Panc1 (cell line): ENCODE measurements at regions of chr17 and their contacts with region 1.

Region 1: GRCh38 chr17:79741751-79742588 is 11.2 kb downstream of the ENPP7 start:
- DNase-seq: no peak
- ATAC-seq: peak; percentile 85
- H3K4me3 ChIP-seq: peak overlapping the region; percentile 15 to 21; a peak in 3 of 4 replicates
- H3K27ac ChIP-seq: no peak overlapping the region
- H3K4me1 ChIP-seq: peaks cover 5% of the 10 kb centered on the region; the same call in 1 of the 2 replicates
- H3K27me3 ChIP-seq: no peaks in the 10 kb centered on the region
- CTCF ChIP-seq: peak; percentile 100

Region 2: DNA sequence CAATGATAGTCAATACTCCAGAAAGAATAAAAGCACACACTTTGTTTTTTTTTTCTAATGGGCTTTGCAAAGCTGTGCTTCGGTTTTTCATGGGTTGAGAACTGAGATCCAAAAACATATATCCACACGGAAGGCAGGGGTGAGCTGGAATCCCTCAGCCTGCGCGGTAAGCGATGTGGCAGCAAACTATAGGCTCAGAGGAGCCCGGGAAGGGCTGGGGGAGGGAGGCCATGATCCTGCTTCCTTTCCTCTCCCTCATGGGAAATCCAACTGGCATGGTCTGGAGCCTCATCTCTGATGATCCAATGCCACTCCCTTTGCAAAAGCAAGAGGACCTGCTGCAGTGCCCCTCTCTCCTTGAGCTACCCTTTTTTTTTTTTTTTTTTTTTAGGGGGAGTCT is 139.3 kb before region 1 on chr17:
- CTCF ChIA-PET with region 1: interaction called, 13 read pairs
- POLR2A ChIA-PET with region 1: no interaction called
- in situ Hi-C with region 1: no loop called
- intact Hi-C with region 1: no loop called
- DNase-seq: no peak
- ATAC-seq: no peak
- H3K4me3 ChIP-seq: no peak overlapping the region
- H3K27ac ChIP-seq: no peak overlapping the region
- H3K4me1 ChIP-seq: no peaks in the 10 kb centered on the region
- H3K27me3 ChIP-seq: peaks cover 32% of the 10 kb centered on the region
- CTCF ChIP-seq: no peak

Region 3: GRCh38 chr17:79777116-79777893 is 35.3 kb after region 1 on chr17:
- CTCF ChIA-PET with region 1: interaction called, 3 read pairs
- POLR2A ChIA-PET with region 1: interaction called, 17 read pairs
- in situ Hi-C with region 1: no loop called
- intact Hi-C with region 1: no loop called
- DNase-seq: no peak
- ATAC-seq: peak; percentile 73
- H3K4me3 ChIP-seq: peak overlapping the region; percentile 60 to 62
- H3K27ac ChIP-seq: peak overlapping the region; percentile 57; the same call in 1 of the 2 replicates
- H3K4me1 ChIP-seq: peaks cover 20% of the 10 kb centered on the region
- H3K27me3 ChIP-seq: peaks cover 18% of the 10 kb centered on the region
- CTCF ChIP-seq: no peak